ENCODE measurements at regions of chr1 and their contacts with region 1.

Region 1: GRCh38 chr1:62746085-62746808 is 37.7 kb upstream of the ATG4C start:
- DNase-seq: peak in 1 of 2 donors; percentile 64
- ATAC-seq: no peak
- H3K4me3 ChIP-seq: no peak overlapping the region
- H3K4me3 Mint-ChIP-seq: no peak overlapping the region
- H3K27ac ChIP-seq: no peak overlapping the region
- H3K27ac Mint-ChIP-seq: no peak overlapping the region
- H3K4me1 ChIP-seq: no peaks in the 10 kb centered on the region
- H3K4me1 Mint-ChIP-seq: no peaks in the 10 kb centered on the region
- H3K27me3 ChIP-seq: peaks cover 3% of the 10 kb centered on the region
- H3K27me3 Mint-ChIP-seq: peaks cover 0 to 27% of the 10 kb centered on the region in 2 donors
- CTCF ChIP-seq: peak; percentile 60

Region 2: DNA sequence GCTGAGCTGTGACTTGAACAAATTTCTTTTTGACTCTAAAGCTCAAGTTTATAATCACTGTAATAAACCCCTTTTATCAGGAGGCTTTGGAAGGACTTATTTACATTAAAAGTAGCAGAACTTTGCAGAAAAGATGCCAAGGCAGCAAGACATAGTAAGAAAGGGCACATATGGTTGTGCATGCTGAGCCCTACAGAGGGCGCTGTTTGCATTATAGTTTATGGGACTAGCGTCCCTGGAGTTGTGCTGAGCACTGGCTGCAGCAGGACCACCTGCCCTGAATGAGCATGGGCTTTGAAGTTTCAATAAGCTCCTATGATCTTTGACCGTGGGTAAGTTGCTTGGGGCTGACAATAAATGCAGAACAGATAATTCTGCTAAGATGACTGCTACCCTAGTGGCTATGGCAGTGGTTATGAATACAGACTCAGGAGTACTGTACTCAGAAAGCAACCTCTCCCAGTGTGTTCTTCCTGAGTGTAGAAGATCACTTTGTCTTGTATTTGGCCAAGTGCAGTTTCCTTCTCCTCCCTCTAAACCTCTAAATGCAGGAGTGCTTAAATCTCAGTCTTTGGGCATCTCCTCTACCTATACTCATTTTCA is 354.8 kb before region 1 on chr1:
- intact Hi-C with region 1: loop called (anchors 5 kb)
- DNase-seq: peak; percentile 18 to 44
- ATAC-seq: peak in 2 of 3 donors; percentile 38 to 65
- H3K4me3 ChIP-seq: no peak overlapping the region
- H3K4me3 Mint-ChIP-seq: no peak overlapping the region
- H3K27ac ChIP-seq: no peak overlapping the region
- H3K27ac Mint-ChIP-seq: no peak overlapping the region
- H3K4me1 ChIP-seq: no peaks in the 10 kb centered on the region
- H3K4me1 Mint-ChIP-seq: no peaks in the 10 kb centered on the region
- H3K27me3 ChIP-seq: no peaks in the 10 kb centered on the region
- H3K27me3 Mint-ChIP-seq: peaks cover 0 to 16% of the 10 kb centered on the region in 2 donors
- CTCF ChIP-seq: peak; percentile 56

Region 3: DNA sequence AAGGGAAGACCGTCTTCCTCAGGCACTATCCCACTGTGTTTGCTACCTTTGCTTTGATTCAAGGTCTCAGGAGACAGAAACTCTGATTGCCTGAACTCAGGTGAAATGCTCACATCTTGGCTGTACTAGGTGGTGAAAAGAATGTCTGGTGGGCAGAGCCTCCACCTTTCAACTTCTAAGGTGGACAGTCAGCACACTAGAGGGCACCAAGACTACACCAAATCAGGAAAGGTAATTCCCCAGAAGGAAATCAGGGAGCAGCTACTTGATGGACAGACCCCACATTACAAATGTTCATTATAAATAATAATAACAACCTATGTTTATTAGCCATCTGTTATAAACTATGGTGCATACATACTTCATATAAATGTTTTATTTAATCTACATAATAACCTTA is 258.6 kb after region 1 on chr1:
- intact Hi-C with region 1: no loop called
- DNase-seq: no peak
- ATAC-seq: no peak
- H3K4me3 ChIP-seq: no peak overlapping the region
- H3K4me3 Mint-ChIP-seq: no peak overlapping the region
- H3K27ac ChIP-seq: no peak overlapping the region
- H3K27ac Mint-ChIP-seq: no peak overlapping the region
- H3K4me1 ChIP-seq: no peaks in the 10 kb centered on the region
- H3K4me1 Mint-ChIP-seq: no peaks in the 10 kb centered on the region
- H3K27me3 ChIP-seq: no peaks in the 10 kb centered on the region
- H3K27me3 Mint-ChIP-seq: peaks cover 0 to 9% of the 10 kb centered on the region in 2 donors
- CTCF ChIP-seq: no peak

Measured in natural killer cell (primary cell).